Endothelial cell of umbilical vein (primary cell): ENCODE measurements at regions of chr7 and their contacts with region 1.

Region 1: GRCh38 chr7:84113286-84113685 is 81.3 kb downstream of the SEMA3A start:
- DNase-seq: peak; percentile 84
- H3K4me3 ChIP-seq: no peak overlapping the region
- H3K27ac ChIP-seq: peak overlapping the region; percentile 52
- H3K4me1 ChIP-seq: peaks cover 25% of the 10 kb centered on the region
- H3K27me3 ChIP-seq: no peaks in the 10 kb centered on the region
- CTCF ChIP-seq: no peak
- POLR2A ChIP-seq: no peak

Region 2: DNA sequence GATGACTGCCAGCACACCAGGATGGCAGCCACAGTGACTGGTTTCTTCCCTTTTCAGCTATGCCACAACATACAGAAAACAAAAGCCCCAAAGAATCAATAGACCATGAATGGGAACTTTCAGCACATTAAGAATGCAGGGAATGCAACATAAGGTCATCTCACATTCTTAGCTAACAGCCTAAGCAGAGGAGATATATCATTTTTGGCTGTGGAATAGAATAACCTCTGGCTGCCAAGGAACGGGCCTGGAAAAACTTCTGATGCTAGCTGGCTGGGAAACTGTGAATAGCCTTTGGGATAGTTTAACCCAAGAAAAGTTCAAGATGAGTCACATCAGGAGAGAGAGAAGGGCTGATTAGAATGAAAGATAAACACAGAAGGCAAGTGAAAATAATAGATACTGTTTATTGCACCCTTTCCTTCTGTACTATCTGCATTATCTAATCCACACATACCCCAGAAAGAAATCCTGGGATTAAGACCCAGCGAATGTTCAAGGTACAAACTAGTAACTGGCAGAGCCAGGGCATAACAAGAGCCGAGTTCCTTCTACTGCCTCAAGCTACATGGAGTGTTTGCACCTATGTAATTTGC is 87.9 kb before region 1 on chr7:
- CTCF ChIA-PET with region 1: no interaction called
- POLR2A ChIA-PET with region 1: no interaction called
- dilution Hi-C with region 1: no loop called
- intact Hi-C with region 1: loop called (anchors 5 kb)
- DNase-seq: peak; percentile 95
- H3K4me3 ChIP-seq: no peak overlapping the region
- H3K27ac ChIP-seq: peak overlapping the region; percentile 65
- H3K4me1 ChIP-seq: peaks cover 15% of the 10 kb centered on the region
- H3K27me3 ChIP-seq: no peaks in the 10 kb centered on the region
- CTCF ChIP-seq: no peak
- POLR2A ChIP-seq: no peak

Region 3: GRCh38 chr7:84042110-84042539 is 71.2 kb before region 1 on chr7:
- CTCF ChIA-PET with region 1: no interaction called
- POLR2A ChIA-PET with region 1: no interaction called
- dilution Hi-C with region 1: no loop called
- intact Hi-C with region 1: no loop called
- DNase-seq: peak; percentile 82
- H3K4me3 ChIP-seq: no peak overlapping the region
- H3K27ac ChIP-seq: peak overlapping the region; percentile 35
- H3K4me1 ChIP-seq: peaks cover 13% of the 10 kb centered on the region
- H3K27me3 ChIP-seq: no peaks in the 10 kb centered on the region
- CTCF ChIP-seq: no peak
- POLR2A ChIP-seq: peak; percentile 31

Region 4: DNA sequence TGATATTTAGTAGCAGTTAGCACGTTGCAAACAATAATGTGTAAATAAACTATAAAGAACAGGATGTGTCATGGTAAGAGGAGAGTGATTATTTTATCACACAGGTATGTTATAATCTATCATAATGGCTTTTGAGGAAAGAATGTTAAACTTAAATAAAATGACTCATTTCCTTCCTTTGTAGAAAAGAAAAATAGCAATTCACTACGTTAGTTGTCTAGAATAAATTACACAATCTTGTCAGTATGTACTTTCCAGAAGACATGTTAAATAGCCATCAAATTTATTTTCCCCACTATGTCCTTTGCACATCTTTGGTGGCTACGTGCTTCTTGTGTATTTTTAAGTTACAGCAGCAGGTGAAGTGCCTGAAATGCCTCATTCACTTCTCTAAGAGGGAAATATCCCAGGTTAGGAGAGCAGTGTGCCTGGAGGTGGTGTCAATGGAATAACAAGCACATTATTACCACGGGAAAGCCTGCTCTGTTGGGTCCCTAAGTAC is 52.5 kb before region 1 on chr7:
- CTCF ChIA-PET with region 1: no interaction called
- POLR2A ChIA-PET with region 1: no interaction called
- dilution Hi-C with region 1: no loop called
- intact Hi-C with region 1: loop called (anchors 2 kb)
- DNase-seq: peak; percentile 77
- H3K4me3 ChIP-seq: peak overlapping the region in 1 of 3 experiments; percentile 32
- H3K27ac ChIP-seq: peak overlapping the region; percentile 89
- H3K4me1 ChIP-seq: peaks cover 24% of the 10 kb centered on the region
- H3K27me3 ChIP-seq: no peaks in the 10 kb centered on the region
- CTCF ChIP-seq: no peak
- POLR2A ChIP-seq: no peak

Region 5: GRCh38 chr7:84302949-84303348 is 189.7 kb after region 1 on chr7:
- CTCF ChIA-PET with region 1: no interaction called
- POLR2A ChIA-PET with region 1: no interaction called
- dilution Hi-C with region 1: no loop called
- intact Hi-C with region 1: loop called (anchors 5 kb)
- DNase-seq: no peak
- H3K4me3 ChIP-seq: no peak overlapping the region
- H3K27ac ChIP-seq: no peak overlapping the region
- H3K4me1 ChIP-seq: no peaks in the 10 kb centered on the region
- H3K27me3 ChIP-seq: no peaks in the 10 kb centered on the region
- CTCF ChIP-seq: no peak
- POLR2A ChIP-seq: no peak

Region 6: DNA sequence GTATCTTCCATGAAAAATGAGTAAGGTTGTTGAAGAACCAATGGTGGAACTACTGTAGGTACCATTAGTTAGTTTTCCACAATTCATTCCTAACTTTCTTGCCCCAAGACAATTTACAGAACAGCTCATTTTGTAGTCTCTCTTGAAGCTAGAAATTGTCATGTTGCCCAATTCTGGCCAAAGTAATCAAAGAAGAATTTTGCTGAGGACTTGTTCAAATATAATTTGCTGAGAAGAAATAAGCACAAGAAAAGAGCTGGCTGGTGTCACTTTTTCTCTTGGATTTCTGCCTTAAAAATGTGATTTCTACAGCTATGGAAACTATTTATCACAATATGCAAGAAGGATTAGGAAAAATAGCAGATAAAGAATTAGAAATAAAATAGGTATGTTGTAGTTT is 280.5 kb after region 1 on chr7:
- CTCF ChIA-PET with region 1: no interaction called
- POLR2A ChIA-PET with region 1: no interaction called
- dilution Hi-C with region 1: no loop called
- intact Hi-C with region 1: no loop called
- DNase-seq: no peak
- H3K4me3 ChIP-seq: no peak overlapping the region
- H3K27ac ChIP-seq: no peak overlapping the region
- H3K4me1 ChIP-seq: no peaks in the 10 kb centered on the region
- H3K27me3 ChIP-seq: no peaks in the 10 kb centered on the region
- CTCF ChIP-seq: no peak
- POLR2A ChIP-seq: no peak